CD8-positive, alpha-beta T cell (primary cell): ENCODE measurements at regions of chr12 and their contacts with region 1.

Region 1: GRCh38 chr12:121351820-121352681 is at the start of gene ANAPC5:
- DNase-seq: peak; percentile 78 to 97 (median 89)
- ATAC-seq: peak; percentile 98
- H3K4me3 ChIP-seq: peak within 1 kb of the TSS; percentile 79 to 93
- H3K4me3 Mint-ChIP-seq: peak within 1 kb of the TSS; percentile 97
- H3K27ac ChIP-seq: peak within 1 kb of the TSS; percentile 74 to 75
- H3K27ac Mint-ChIP-seq: peak within 1 kb of the TSS; percentile 98
- H3K4me1 ChIP-seq: peaks cover 15% of the 10 kb centered on the region
- H3K4me1 Mint-ChIP-seq: peaks cover 34% of the 10 kb centered on the region
- H3K27me3 ChIP-seq: no peaks in the 10 kb centered on the region
- H3K27me3 Mint-ChIP-seq: no peaks in the 10 kb centered on the region
- CTCF ChIP-seq: no peak
- total RNA-seq, gene ANAPC5: 96.5 to 106 TPM

Region 2: DNA sequence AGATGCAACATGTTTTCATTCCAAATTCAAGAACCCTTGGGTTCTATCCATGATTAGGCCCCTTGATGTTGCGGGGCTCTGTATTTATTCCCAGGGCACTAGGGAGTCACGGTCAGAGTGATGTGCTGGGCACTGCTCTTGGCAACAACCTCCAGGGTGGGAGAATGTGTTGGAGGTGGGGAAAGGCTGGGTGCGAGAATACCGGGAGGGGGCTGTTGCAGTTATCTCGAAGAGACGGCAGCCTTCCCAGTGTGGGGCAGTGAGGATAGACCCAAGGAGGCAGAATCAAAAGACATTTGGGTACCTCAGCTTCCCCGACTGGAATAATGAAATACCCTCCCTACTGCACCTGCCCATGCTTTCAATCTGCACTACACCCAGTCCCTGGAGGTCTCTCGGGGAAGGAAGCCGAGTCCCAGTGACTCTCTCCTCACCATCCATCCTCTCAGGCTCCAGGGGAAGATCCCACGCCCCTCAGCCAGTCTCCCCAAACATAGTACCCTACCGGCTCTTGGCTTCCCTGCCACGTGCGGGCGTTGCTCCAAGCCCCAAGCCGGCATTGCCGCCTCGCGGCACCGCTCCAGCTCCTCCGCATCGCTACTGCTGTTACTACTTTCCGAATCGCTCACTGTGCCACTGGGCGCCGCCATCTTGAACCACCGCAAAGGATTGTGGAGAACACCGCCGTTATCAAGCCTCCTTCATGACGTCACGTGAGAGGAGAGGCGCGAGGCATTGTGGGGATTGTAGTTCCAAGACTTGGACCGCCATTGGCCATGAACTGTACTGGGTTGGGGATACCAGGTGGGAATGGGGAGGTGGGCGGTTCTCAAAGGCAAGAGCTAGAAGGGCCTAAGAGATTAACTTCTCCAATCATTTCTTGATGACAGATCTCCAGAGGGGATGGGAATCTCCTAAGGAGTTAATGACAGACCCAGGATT is 336.0 kb before region 1 on chr12 and contains the start of gene C12orf43:
- CTCF ChIA-PET with region 1: no interaction called
- POLR2A ChIA-PET with region 1: no interaction called
- intact Hi-C with region 1: loop called in 1 of 2 experiments (anchors 5 kb)
- DNase-seq: peak; percentile 83 to 95 (median 92)
- ATAC-seq: peak; percentile 97
- H3K4me3 ChIP-seq: peak within 1 kb of the TSS; percentile 69 to 91
- H3K4me3 Mint-ChIP-seq: peak within 1 kb of the TSS; percentile 93
- H3K27ac ChIP-seq: peak within 1 kb of the TSS; percentile 60 to 89
- H3K27ac Mint-ChIP-seq: peak within 1 kb of the TSS; percentile 93
- H3K4me1 ChIP-seq: peaks cover 8% of the 10 kb centered on the region
- H3K4me1 Mint-ChIP-seq: peaks cover 21% of the 10 kb centered on the region
- H3K27me3 ChIP-seq: no peaks in the 10 kb centered on the region
- H3K27me3 Mint-ChIP-seq: no peaks in the 10 kb centered on the region
- CTCF ChIP-seq: no peak
- total RNA-seq, gene C12orf43: 20.7 to 21.4 TPM

Region 3: DNA sequence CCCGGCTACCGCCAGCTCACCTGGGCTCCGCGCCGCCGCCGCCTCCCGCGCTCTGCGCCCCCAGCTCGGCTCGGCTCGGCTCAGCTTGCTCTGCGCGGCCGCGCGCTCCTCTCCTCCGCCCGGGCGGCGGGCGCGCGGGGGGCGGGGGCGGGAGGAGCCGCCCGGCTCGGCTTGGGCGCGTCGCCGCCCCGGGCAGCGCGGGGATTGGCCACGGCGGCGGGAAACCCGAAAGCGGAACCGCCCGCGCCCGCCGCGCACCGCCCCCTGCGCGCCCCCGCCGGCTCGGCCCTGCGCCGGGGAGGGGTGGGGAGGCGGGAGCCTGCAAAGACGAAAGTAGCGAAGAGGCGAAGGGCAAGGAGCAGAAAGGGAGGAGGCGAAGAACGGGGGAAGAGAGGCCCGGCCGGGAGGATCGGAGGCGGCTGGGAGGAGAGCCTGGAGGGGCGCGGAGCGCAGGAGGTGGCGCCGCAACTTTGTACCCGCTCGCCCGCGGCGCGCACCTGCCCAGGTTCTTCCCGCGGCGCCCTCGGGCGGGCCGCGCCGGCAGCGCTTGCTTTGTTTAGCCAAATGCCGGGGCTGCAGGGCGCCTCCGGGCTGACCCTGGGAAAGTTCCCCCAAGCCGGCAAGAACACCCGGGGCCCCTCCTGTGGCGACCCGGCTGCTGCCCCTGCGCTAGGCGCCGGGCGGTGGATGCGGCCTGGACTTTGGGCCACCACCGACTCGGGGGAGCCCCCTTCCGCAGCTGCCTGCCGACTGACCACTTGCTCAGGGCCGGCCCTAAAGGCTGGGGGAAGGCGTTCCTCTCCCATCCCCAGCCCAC is 55.2 kb before region 1 on chr12 and contains the start of gene CAMKK2:
- CTCF ChIA-PET with region 1: no interaction called
- POLR2A ChIA-PET with region 1: no interaction called
- intact Hi-C with region 1: loop called in 1 of 2 experiments (anchors 1 kb)
- DNase-seq: peak; percentile 77 to 94 (median 85)
- ATAC-seq: peak; percentile 88
- H3K4me3 ChIP-seq: peak within 1 kb of the TSS; percentile 73 to 93
- H3K4me3 Mint-ChIP-seq: peak within 1 kb of the TSS; percentile 87
- H3K27ac ChIP-seq: peak within 1 kb of the TSS; percentile 31 to 59
- H3K27ac Mint-ChIP-seq: peak within 1 kb of the TSS; percentile 80
- H3K4me1 ChIP-seq: peaks cover 15% of the 10 kb centered on the region
- H3K4me1 Mint-ChIP-seq: peaks cover 20% of the 10 kb centered on the region
- H3K27me3 ChIP-seq: no peaks in the 10 kb centered on the region
- H3K27me3 Mint-ChIP-seq: no peaks in the 10 kb centered on the region
- CTCF ChIP-seq: no peak
- total RNA-seq, gene CAMKK2: 3.6 to 4.1 TPM

Region 4: DNA sequence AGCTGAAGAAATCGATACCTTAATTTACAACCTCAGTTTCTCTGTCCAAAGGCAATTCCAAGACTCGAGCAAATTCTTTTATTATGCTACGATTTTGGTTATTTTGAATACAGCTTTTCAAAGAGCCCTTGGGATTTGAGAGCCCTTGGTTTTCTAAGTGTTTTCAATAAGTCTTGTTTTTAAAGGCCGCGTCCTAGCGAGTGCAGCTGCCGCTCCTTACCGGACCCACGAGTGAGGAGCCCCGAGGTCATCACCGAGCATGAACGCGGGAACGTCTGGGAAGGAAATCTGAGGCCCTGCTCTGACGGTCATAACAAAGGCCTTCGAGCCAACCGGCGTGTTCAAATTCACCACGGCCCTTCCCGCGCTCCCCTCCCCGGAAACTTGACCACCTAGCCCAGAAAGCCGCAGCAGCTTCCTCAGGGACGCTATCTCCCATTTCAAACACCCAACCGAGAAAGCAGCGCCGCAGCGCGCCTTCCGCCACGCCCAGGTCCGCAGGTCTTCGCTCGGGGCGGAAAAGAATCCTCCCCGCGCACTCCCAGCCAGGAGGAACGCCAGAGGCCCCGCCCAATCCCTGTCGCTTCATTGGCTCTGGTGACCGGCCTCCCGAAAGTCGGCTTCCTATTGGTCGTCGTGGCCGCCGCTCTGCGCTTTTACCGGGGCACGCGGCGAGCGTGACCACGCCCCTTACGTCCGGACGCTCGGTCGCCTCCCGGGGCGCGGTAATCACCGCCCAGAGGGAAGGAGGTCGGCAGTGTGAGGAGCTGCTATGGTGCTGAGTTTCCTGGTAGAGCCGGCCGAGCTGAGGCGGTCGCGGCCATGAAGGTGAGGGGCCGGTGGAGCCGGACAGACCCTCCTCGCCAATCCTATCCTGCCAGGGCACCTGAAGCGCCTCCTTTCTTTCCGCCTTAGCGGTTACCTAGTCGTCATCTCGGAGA is 47.6 kb after region 1 on chr12 and contains the start of gene RNF34:
- CTCF ChIA-PET with region 1: interaction called, 4 read pairs
- POLR2A ChIA-PET with region 1: interaction called, 21 read pairs
- intact Hi-C with region 1: loop called (anchors 1 kb)
- DNase-seq: peak; percentile 95 to 99 (median 97)
- ATAC-seq: peak; percentile 87
- H3K4me3 ChIP-seq: peak within 1 kb of the TSS; percentile 78 to 89
- H3K4me3 Mint-ChIP-seq: peak within 1 kb of the TSS; percentile 86
- H3K27ac ChIP-seq: peak within 1 kb of the TSS; percentile 78 to 90
- H3K27ac Mint-ChIP-seq: peak within 1 kb of the TSS; percentile 97
- H3K4me1 ChIP-seq: peaks cover 28% of the 10 kb centered on the region
- H3K4me1 Mint-ChIP-seq: peaks cover 33% of the 10 kb centered on the region
- H3K27me3 ChIP-seq: no peaks in the 10 kb centered on the region
- H3K27me3 Mint-ChIP-seq: no peaks in the 10 kb centered on the region
- CTCF ChIP-seq: no peak
- total RNA-seq, gene RNF34: 46.8 to 51.3 TPM

Region 5: DNA sequence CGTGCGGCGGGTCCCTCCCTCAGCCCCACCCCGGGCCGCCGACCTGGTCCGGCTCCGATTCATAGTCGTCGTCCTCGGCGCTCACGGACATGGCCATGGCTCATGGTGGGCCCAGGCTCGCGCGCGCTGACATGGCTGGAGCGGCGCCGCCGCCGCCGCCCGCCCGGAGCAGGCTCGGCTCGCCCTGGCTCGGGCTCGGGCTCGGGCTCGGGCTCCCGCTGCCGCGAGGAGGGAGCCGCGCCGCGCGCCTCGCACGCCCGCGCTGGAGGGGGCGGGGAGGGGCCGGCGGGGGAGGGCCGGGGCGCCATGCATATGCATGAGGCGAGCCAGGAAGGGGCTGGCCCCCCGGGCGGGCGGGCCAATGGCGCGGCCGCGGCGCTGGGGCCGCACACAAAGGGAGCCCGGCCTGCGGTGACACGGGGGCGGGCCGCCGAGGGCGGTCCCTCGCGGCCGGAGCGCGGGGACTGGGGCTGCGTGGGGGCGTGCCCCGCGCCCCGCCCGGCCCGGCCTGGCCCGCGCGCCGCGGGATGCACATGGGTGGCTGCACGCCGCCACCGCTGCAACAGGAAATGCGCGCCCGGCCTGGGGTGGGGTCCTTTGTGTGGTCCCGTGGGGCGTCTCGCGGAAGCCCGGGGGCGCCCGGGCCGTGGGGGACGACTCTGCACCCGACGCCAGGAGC is 115.2 kb after region 1 on chr12:
- CTCF ChIA-PET with region 1: no interaction called
- POLR2A ChIA-PET with region 1: no interaction called
- intact Hi-C with region 1: loop called (anchors 1 to 2 kb)
- DNase-seq: peak; percentile 77 to 94 (median 86)
- ATAC-seq: peak; percentile 85
- H3K4me3 ChIP-seq: peak overlapping the region; percentile 49 to 55
- H3K4me3 Mint-ChIP-seq: peak overlapping the region; percentile 68
- H3K27ac ChIP-seq: peak overlapping the region; percentile 44 to 59
- H3K27ac Mint-ChIP-seq: no peak overlapping the region
- H3K4me1 ChIP-seq: peaks cover 26% of the 10 kb centered on the region
- H3K4me1 Mint-ChIP-seq: peaks cover 37% of the 10 kb centered on the region
- H3K27me3 ChIP-seq: no peaks in the 10 kb centered on the region
- H3K27me3 Mint-ChIP-seq: no peaks in the 10 kb centered on the region
- CTCF ChIP-seq: no peak

Region 6: DNA sequence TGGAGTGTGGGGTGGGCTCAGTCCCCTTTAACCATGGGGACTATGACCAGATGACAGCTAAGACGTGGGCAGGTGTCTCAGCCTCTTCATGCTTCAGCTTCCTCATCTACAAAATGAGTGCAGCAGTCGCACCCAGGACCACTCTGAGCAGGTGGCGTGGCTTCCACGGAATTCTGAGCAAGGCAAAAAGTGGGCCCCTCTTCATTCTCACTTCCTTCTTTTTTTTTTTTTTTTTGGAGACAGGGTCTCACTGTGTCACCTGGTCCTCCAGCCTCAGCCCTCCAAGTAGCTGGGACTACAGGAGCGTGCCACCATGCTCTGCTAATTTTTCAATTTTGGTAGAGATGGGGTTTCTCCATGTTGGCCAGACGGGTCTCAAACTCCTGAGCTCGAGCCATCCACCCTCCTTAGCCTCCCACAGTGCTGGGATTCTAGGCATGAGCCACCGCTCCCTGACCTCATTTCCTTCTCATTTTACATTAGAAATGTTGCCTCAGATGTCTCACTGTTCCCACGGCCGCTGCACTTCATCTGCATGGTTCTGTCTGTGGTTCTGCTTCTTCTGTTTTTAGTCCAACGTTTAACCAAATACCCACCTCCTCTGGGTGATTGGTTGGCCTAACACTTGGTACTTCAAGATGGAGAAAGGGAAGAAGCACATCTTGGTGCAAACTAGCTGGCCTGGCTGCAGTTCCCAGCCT is 628.3 kb after region 1 on chr12:
- CTCF ChIA-PET with region 1: no interaction called
- POLR2A ChIA-PET with region 1: no interaction called
- intact Hi-C with region 1: no loop called
- DNase-seq: peak in 1 of 9 experiments; percentile 22
- ATAC-seq: no peak
- H3K4me3 ChIP-seq: no peak overlapping the region
- H3K4me3 Mint-ChIP-seq: no peak overlapping the region
- H3K27ac ChIP-seq: no peak overlapping the region
- H3K27ac Mint-ChIP-seq: no peak overlapping the region
- H3K4me1 ChIP-seq: no peaks in the 10 kb centered on the region
- H3K4me1 Mint-ChIP-seq: peaks cover 6% of the 10 kb centered on the region
- H3K27me3 ChIP-seq: no peaks in the 10 kb centered on the region
- H3K27me3 Mint-ChIP-seq: no peaks in the 10 kb centered on the region
- CTCF ChIP-seq: no peak